A673 (cell line): ENCODE measurements at regions of chr9 and their contacts with region 1.

Region 1: GRCh38 chr9:130095872-130096271 is 42.2 kb downstream of the GPR107 start:
- DNase-seq: no peak
- H3K4me3 ChIP-seq: no peak overlapping the region
- H3K27ac ChIP-seq: no peak overlapping the region
- H3K4me1 ChIP-seq: peaks cover 12% of the 10 kb centered on the region
- H3K27me3 ChIP-seq: no peaks in the 10 kb centered on the region
- CTCF ChIP-seq: no peak

Region 2: GRCh38 chr9:130053504-130054324 is 42.2 kb before region 1 on chr9 and contains the start of gene GPR107:
- CTCF ChIA-PET with region 1: no interaction called
- POLR2A ChIA-PET with region 1: no interaction called
- intact Hi-C with region 1: loop called (anchors 5 kb)
- DNase-seq: peak; percentile 82
- H3K4me3 ChIP-seq: peak within 1 kb of the TSS; percentile 68
- H3K27ac ChIP-seq: peak within 1 kb of the TSS; percentile 93
- H3K4me1 ChIP-seq: peaks cover 17% of the 10 kb centered on the region
- H3K27me3 ChIP-seq: no peaks in the 10 kb centered on the region
- CTCF ChIP-seq: no peak
- total RNA-seq, gene GPR107: 47.1 and 50.9 TPM in 2 replicates

Region 3: DNA sequence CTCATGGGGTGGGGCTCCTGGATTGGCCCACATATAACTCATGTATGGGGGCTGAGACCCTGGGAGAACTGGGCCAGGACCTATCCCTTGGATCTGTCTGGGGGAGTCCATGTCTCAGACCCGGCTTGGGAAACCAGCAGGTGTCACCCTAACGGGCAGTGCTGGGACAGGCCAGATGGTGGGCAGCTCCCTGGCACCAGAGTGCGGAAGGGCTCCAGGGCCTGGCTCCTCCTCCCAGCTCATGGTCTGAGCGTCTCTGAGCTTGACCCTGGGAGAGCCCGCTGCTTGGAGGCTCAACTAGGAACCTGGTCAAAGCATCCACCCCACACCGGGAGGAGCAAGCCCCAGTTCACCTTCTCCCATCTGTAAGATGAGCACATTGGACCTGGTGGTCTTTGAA is 60.8 kb after region 1 on chr9:
- CTCF ChIA-PET with region 1: no interaction called
- POLR2A ChIA-PET with region 1: no interaction called
- intact Hi-C with region 1: no loop called
- DNase-seq: no peak
- H3K4me3 ChIP-seq: no peak overlapping the region
- H3K27ac ChIP-seq: no peak overlapping the region
- H3K4me1 ChIP-seq: no peaks in the 10 kb centered on the region
- H3K27me3 ChIP-seq: no peaks in the 10 kb centered on the region
- CTCF ChIP-seq: no peak